ENCODE measurements at regions of chr19 and their contacts with region 1.

Region 1: GRCh38 chr19:53927739-53928138 is 18.7 kb downstream of the CACNG7 start:
- DNase-seq: no peak

Region 2: DNA sequence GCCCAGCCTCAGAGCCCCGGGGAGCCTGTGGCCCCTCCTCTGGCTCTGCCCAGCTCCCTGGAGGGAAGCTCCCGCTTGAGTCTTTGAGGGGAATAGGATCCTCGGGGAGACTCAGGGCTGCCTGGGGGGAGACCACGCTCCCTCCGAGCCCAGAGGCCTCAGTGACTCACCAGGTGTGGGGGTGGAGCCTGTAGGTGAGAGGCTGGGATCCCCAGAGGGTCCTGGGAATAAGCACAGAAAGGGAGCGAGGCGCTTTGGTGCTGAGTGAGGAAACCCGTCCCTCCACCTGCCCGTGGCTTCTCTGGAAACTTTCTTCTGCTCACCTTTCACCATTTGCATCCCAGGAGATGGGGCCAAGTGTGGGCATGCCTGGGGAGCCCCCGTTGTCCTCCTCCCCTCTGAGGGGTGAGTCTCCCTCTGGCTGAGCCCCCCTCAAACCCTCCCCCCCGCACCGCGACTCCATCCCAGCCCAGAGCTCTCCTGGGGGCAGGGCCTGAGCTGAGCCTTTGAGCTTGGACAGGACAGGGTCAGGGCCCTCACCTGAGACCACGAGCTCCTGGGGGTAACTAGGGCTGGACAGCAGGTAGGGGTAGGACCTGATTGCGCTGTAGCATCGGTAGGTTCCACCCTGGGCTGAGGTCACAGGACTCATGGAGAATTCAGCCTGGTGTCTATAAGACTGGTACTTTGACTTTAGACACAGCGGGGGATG is 326.6 kb after region 1 on chr19:
- intact Hi-C with region 1: loop called in 1 of 2 experiments (anchors 5 kb)
- DNase-seq: no peak